GM12878 (cell line): ENCODE measurements at regions of chr15 and their contacts with region 1.

Region 1: DNA sequence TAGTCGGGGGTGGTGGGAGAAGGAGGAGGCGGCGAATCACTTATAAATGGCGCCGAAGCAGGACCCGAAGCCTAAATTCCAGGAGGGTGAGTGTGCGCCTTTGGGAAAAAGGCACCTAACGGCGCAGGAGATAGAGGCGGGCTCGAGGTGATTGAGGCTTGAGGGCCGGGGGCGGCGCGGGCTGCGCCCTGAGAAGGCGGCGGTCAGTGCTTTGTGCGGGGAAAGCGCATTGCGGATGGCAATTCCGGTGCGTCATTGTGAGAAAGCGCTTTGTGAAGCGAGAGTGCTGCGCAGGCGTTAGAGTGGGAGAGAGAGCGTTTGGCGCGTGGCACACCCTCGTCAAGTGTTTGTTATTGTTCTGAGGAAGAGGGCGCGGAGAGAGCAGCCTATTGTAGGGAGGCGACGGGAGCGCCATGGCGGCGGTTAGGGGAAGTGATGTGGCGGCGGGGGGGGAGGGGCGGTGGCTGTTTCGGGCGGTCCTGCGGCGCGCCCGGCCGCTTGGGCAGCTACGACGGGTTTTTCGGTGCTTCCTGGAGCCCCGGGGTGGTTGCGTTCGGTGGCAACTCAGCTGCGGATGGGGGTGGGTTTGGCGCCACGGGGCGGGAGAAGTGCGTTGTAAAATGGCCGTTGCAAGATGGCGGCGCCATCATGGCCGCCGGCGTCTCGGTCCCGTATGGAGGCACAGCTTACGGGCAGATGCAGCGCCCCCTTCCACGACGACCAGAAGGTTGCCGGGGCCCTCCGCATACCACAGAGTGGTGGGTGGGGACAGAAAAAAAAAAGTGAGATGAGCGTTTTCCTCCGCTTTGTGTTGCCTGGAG is 492 bp downstream of the MORF4L1 start:
- DNase-seq: peak; percentile 53
- ATAC-seq: peak; percentile 83
- H3K4me3 ChIP-seq: peak overlapping the region; percentile 90
- H3K27ac ChIP-seq: peak overlapping the region; percentile 99
- H3K4me1 ChIP-seq: peaks cover 3% of the 10 kb centered on the region; the same call in 1 of the 2 replicates
- H3K27me3 ChIP-seq: no peaks in the 10 kb centered on the region
- CTCF ChIP-seq: peak; percentile 42 to 58 (median 54)
- EP300 ChIP-seq: no peak
- POLR2A ChIP-seq: peak; percentile 92
- RAD21 ChIP-seq: no peak

Region 2: GRCh38 chr15:78757636-78757905 is 115.6 kb before region 1 on chr15:
- CTCF ChIA-PET with region 1: interaction called, 11 read pairs
- POLR2A ChIA-PET with region 1: interaction called, 5 read pairs
- RAD21 ChIA-PET with region 1: interaction called, 4 read pairs
- SMC1A ChIA-PET with region 1: no interaction called
- in situ Hi-C with region 1: no loop called
- intact Hi-C with region 1: loop called (anchors 2 kb)
- DNase-seq: no peak
- ATAC-seq: no peak
- H3K4me3 ChIP-seq: no peak overlapping the region
- H3K27ac ChIP-seq: peak overlapping the region; percentile 82
- H3K4me1 ChIP-seq: peaks cover 40% of the 10 kb centered on the region
- H3K27me3 ChIP-seq: no peaks in the 10 kb centered on the region
- CTCF ChIP-seq: no peak
- EP300 ChIP-seq: no peak
- POLR2A ChIP-seq: no peak
- RAD21 ChIP-seq: no peak

Region 3: GRCh38 chr15:78859971-78860732 is 13.0 kb before region 1 on chr15:
- CTCF ChIA-PET with region 1: interaction called, 4 read pairs
- POLR2A ChIA-PET with region 1: interaction called, 6 read pairs
- RAD21 ChIA-PET with region 1: interaction called, 5 read pairs
- SMC1A ChIA-PET with region 1: interaction called, 5 read pairs
- in situ Hi-C with region 1: no loop called
- intact Hi-C with region 1: loop called (anchors 1 kb)
- DNase-seq: peak; percentile 44
- ATAC-seq: peak; percentile 95
- H3K4me3 ChIP-seq: peak overlapping the region; percentile 59
- H3K27ac ChIP-seq: no peak overlapping the region
- H3K4me1 ChIP-seq: peaks cover 3% of the 10 kb centered on the region; the same call in 1 of the 2 replicates
- H3K27me3 ChIP-seq: no peaks in the 10 kb centered on the region
- CTCF ChIP-seq: peak; percentile 50 to 56 (median 56); a peak in 5 of 6 replicates
- EP300 ChIP-seq: no peak; a peak in 1 of 4 replicates
- POLR2A ChIP-seq: no peak
- RAD21 ChIP-seq: peak; percentile 41; the same call in 1 of the 2 replicates

Region 4: GRCh38 chr15:78944669-78945407 is 71.7 kb after region 1 on chr15 and contains the start of gene CTSH:
- CTCF ChIA-PET with region 1: interaction called, 3 read pairs
- POLR2A ChIA-PET with region 1: interaction called, 12 read pairs
- RAD21 ChIA-PET with region 1: interaction called, 5 read pairs
- SMC1A ChIA-PET with region 1: interaction called, 8 read pairs
- in situ Hi-C with region 1: no loop called
- intact Hi-C with region 1: loop called (anchors 2 kb)
- DNase-seq: no peak
- ATAC-seq: peak; percentile 84
- H3K4me3 ChIP-seq: peak within 1 kb of the TSS; percentile 96
- H3K27ac ChIP-seq: peak within 1 kb of the TSS; percentile 96
- H3K4me1 ChIP-seq: peaks cover 4% of the 10 kb centered on the region; the same call in 1 of the 2 replicates
- H3K27me3 ChIP-seq: no peaks in the 10 kb centered on the region; a peak in 1 of 4 replicates
- CTCF ChIP-seq: no peak
- EP300 ChIP-seq: no peak
- POLR2A ChIP-seq: peak; percentile 91
- RAD21 ChIP-seq: 0 out of 2 replicates have a peak, but pooled peaks have one; percentile 9
- polyA plus RNA-seq, gene CTSH: 30.2 to 88.2 TPM